Activated CD4-positive, alpha-beta memory T cell treated with anti-CD3 and anti-CD28 coated beads for 36 hours (primary cell): ENCODE measurements at regions of chr5 and their contacts with region 1.

Region 1: GRCh38 chr5:172188033-172188892 is at the start of gene STK10:
- DNase-seq: peak; percentile 93
- H3K4me3 Mint-ChIP-seq: peak within 1 kb of the TSS; percentile 99
- H3K27ac Mint-ChIP-seq: peak within 1 kb of the TSS; percentile 99
- H3K4me1 Mint-ChIP-seq: peaks cover 25% of the 10 kb centered on the region
- H3K27me3 Mint-ChIP-seq: no peaks in the 10 kb centered on the region
- total RNA-seq, gene STK10: 98.2 to 104 TPM

Region 2: DNA sequence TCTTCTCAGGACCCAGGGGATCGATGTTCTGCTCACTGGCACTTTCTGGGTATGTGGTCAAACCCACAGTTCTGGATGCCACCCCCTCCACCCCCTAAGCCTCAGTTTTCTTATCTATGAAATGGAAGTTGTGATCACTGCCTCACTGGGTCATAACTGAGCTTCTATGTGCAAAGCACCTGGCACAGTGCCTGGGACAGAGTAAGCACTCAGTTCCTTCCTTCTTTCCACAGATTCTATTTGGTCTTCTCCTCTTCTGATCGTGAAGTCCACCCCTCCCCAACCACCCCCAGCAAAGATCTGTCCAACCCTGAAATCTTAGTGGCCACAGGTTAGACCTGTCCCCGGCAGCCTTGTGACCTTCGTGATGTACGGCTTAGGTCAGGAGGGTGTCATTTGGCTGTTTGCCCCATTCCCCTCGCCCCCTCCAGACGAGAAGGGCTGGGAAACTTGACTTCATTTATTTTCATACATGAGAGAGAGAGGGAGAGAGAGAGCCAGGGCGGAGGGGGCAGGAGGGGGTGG is 587.5 kb before region 1 on chr5:
- CTCF ChIA-PET with region 1: no interaction called
- POLR2A ChIA-PET with region 1: no interaction called
- intact Hi-C with region 1: loop called (anchors 5 kb)
- DNase-seq: no peak
- H3K4me3 Mint-ChIP-seq: no peak overlapping the region
- H3K27ac Mint-ChIP-seq: no peak overlapping the region
- H3K4me1 Mint-ChIP-seq: peaks cover 12% of the 10 kb centered on the region
- H3K27me3 Mint-ChIP-seq: peaks cover 9% of the 10 kb centered on the region

Region 3: GRCh38 chr5:171688696-171689495 is 499.4 kb before region 1 on chr5:
- CTCF ChIA-PET with region 1: no interaction called
- POLR2A ChIA-PET with region 1: no interaction called
- intact Hi-C with region 1: no loop called
- DNase-seq: no peak
- H3K4me3 Mint-ChIP-seq: no peak overlapping the region
- H3K27ac Mint-ChIP-seq: no peak overlapping the region
- H3K4me1 Mint-ChIP-seq: no peaks in the 10 kb centered on the region
- H3K27me3 Mint-ChIP-seq: peaks cover 2% of the 10 kb centered on the region

Region 4: GRCh38 chr5:172006321-172007174 is 181.7 kb before region 1 on chr5 and contains the start of gene FBXW11:
- CTCF ChIA-PET with region 1: interaction called, 19 read pairs
- POLR2A ChIA-PET with region 1: interaction called, 7 read pairs
- intact Hi-C with region 1: loop called (anchors 1 kb)
- DNase-seq: peak; percentile 97
- H3K4me3 Mint-ChIP-seq: peak within 1 kb of the TSS; percentile 93
- H3K27ac Mint-ChIP-seq: peak within 1 kb of the TSS; percentile 92
- H3K4me1 Mint-ChIP-seq: peaks cover 53% of the 10 kb centered on the region
- H3K27me3 Mint-ChIP-seq: no peaks in the 10 kb centered on the region
- total RNA-seq, gene FBXW11: 47.2 to 47.4 TPM

Region 5: GRCh38 chr5:172106511-172107356 is 81.5 kb before region 1 on chr5:
- CTCF ChIA-PET with region 1: interaction called, 142 read pairs
- POLR2A ChIA-PET with region 1: interaction called, 70 read pairs
- intact Hi-C with region 1: loop called (anchors 1 kb)
- DNase-seq: peak; percentile 73
- H3K4me3 Mint-ChIP-seq: no peak overlapping the region
- H3K27ac Mint-ChIP-seq: peak overlapping the region; percentile 79
- H3K4me1 Mint-ChIP-seq: peaks cover 57% of the 10 kb centered on the region
- H3K27me3 Mint-ChIP-seq: no peaks in the 10 kb centered on the region

Region 6: GRCh38 chr5:172150514-172151425 is 37.5 kb before region 1 on chr5:
- CTCF ChIA-PET with region 1: interaction called, 11 read pairs
- POLR2A ChIA-PET with region 1: interaction called, 5 read pairs
- intact Hi-C with region 1: loop called (anchors 1 kb)
- DNase-seq: peak; percentile 38
- H3K4me3 Mint-ChIP-seq: peak overlapping the region; percentile 64
- H3K27ac Mint-ChIP-seq: peak overlapping the region; percentile 91
- H3K4me1 Mint-ChIP-seq: peaks cover 81% of the 10 kb centered on the region
- H3K27me3 Mint-ChIP-seq: no peaks in the 10 kb centered on the region

Region 7: GRCh38 chr5:172283020-172283861 is 95.0 kb after region 1 on chr5 and contains the start of gene UBTD2:
- CTCF ChIA-PET with region 1: interaction called, 67 read pairs
- POLR2A ChIA-PET with region 1: interaction called, 7 read pairs
- intact Hi-C with region 1: loop called (anchors 1 kb)
- DNase-seq: peak; percentile 83
- H3K4me3 Mint-ChIP-seq: peak within 1 kb of the TSS; percentile 79
- H3K27ac Mint-ChIP-seq: no peak within 1 kb of the TSS
- H3K4me1 Mint-ChIP-seq: peaks cover 26% of the 10 kb centered on the region
- H3K27me3 Mint-ChIP-seq: no peaks in the 10 kb centered on the region
- total RNA-seq, gene UBTD2: 4.6 to 4.9 TPM

Region 8: DNA sequence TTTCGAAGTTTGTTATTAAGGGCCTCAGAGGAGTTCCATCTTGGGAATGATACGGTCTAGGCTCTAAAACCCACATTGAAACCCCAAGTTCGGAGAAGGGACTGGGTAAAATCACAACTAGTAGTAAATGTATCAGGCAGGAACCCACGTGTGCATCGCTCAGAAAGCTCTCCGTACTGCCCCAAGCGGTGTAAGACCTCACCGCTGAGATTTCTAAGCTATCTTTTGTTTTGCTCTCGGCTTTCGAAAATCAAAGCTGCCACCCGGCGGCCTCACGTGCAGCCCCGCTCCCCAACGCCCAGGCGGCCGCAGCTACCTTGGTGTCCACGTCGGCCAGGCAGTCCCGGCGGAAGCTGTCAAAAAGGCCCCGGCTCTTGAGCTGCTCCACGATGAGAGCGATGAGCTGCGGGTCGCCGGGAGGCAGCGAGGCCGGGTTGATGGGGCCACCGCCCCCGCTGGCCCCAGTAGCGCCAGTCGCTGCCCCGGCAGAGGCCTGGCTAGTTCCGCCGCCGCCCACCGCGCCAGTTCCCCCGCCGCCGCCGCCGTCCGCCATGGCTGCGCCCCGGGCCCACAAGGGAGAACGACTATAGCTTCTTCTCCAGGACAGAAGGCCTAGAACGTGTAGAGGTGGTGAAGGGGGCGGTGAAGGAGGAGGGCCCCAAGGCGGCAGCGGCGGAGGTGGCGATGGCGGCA is 1427.8 kb after region 1 on chr5:
- CTCF ChIA-PET with region 1: no interaction called
- POLR2A ChIA-PET with region 1: no interaction called
- intact Hi-C with region 1: loop called (anchors 10 kb)
- DNase-seq: peak; percentile 80
- H3K4me3 Mint-ChIP-seq: peak overlapping the region; percentile 95
- H3K27ac Mint-ChIP-seq: peak overlapping the region; percentile 90
- H3K4me1 Mint-ChIP-seq: peaks cover 49% of the 10 kb centered on the region
- H3K27me3 Mint-ChIP-seq: no peaks in the 10 kb centered on the region